Activated T-helper 2 cell treated with anti-CD3 and anti-CD28 coated beads, Interferon-gamma antibody, Interleukin-2, Interleukin-4, amounts not matched to agents 10 μg/mL and 5 μg/mL and 100 μg/mL, durations not matched to agents 14 hours and 24 hours and 36 hours (primary cell): ENCODE measurements at regions of chr1 and their contacts with region 1.

Region 1: DNA sequence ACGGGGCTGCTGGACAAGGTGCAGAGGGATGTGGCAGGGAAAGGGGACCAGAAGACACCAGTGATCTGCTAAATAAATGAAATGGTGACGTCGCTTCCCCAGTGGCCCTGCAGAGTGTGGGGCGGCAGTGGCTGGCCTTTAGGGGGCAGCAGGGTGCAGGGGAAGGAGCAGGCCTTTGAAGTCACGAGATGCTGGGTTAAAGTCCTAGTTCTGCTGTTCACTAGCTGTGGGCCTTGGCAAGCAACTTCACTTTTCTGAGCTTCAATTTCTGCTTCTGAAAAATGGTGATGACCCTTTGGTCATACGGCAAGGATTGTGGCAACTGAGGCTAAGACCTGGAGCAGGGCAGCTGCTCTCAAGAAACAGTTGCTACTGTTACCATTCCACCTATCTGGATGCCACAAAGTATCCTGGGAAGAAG is 9.2 kb upstream of the GALE start:
- DNase-seq: peak; percentile 75
- H3K4me3 Mint-ChIP-seq: no peak overlapping the region
- H3K27ac Mint-ChIP-seq: no peak overlapping the region
- H3K4me1 Mint-ChIP-seq: peaks cover 3% of the 10 kb centered on the region
- H3K27me3 Mint-ChIP-seq: no peaks in the 10 kb centered on the region

Region 2: DNA sequence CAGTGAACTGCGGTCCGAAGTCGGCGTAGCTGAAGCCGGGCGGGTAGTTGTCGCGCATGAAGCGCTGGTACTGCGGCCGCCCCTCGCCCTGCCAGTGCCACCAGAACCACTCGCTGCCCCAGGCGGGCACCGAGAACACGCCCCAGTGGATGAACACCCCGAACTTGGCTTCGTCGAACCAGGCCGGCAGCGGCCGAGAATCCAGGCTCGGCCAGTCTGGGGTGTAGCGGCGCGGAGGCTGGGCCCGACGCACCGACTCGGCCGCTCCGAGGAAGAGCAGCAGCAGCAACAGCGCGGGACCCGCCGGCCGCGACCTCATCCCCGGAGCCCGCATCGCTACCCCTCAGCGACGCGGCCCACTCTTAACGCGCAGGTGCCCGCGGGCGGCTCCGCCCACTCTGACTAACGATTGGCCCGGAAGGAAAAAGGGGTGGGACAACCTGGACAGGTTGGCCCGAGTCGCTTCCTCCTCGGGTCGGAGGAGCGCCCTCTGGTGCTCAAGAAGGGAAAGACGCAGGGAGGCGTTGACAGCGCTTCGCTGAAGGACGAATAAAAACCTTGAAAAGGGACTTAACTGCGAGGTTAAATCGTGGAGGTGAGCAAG is 58.3 kb after region 1 on chr1 and contains the start of gene FUCA1:
- intact Hi-C with region 1: loop called (anchors 1 kb)
- DNase-seq: peak; percentile 91
- H3K4me3 Mint-ChIP-seq: peak within 1 kb of the TSS; percentile 86
- H3K27ac Mint-ChIP-seq: peak within 1 kb of the TSS; percentile 49
- H3K4me1 Mint-ChIP-seq: peaks cover 16% of the 10 kb centered on the region
- H3K27me3 Mint-ChIP-seq: peaks cover 16% of the 10 kb centered on the region
- total RNA-seq, gene FUCA1: 3.3 and 4.0 TPM in 2 replicates

Region 3: GRCh38 chr1:24027838-24028468 is 218.2 kb after region 1 on chr1:
- intact Hi-C with region 1: loop called (anchors 2 kb)
- DNase-seq: no peak
- H3K4me3 Mint-ChIP-seq: no peak overlapping the region
- H3K27ac Mint-ChIP-seq: no peak overlapping the region
- H3K4me1 Mint-ChIP-seq: peaks cover 4% of the 10 kb centered on the region
- H3K27me3 Mint-ChIP-seq: peaks cover 3% of the 10 kb centered on the region